Upper lobe of right lung (tissue), 1 donor: ENCODE measurements at regions of chr1 and their contacts with region 1.

Region 1: DNA sequence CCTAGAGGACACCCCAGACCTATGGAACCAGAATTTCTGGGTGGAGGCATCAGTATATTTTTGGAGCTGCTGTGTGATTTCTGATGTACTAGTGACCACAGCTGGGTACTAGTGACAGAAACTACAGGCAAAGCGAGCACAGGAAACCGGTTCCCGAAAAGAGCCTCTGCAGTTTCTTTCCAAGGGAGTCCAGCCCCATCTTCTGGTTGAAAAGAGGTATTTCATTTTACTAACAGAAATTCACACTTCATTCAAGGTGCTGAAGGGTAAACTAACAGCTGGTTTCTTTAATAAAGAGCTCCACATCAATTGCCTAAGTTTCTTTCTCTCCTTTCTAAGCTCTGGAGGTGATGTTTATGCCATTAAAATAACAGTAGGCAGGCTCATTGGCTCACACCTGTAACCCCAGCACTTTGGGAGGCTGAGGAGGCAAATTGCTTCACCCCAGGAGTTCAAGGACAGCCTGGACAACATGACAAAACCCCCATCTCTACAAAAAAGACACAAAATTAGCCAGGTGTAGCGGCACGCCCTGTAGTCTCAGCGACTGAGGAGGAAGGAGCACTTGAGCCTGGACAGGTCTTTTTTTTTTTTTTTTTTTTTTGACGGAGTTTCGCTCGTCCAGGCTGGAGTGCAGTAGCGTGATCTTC is 22.0 kb downstream of the THAP3 start:
- DNase-seq: no peak
- ATAC-seq: peak; percentile 75
- H3K4me3 ChIP-seq: no peak overlapping the region
- H3K27ac ChIP-seq: no peak overlapping the region
- H3K4me1 ChIP-seq: no peaks in the 10 kb centered on the region
- H3K27me3 ChIP-seq: no peaks in the 10 kb centered on the region
- CTCF ChIP-seq: peak; percentile 54

Region 2: DNA sequence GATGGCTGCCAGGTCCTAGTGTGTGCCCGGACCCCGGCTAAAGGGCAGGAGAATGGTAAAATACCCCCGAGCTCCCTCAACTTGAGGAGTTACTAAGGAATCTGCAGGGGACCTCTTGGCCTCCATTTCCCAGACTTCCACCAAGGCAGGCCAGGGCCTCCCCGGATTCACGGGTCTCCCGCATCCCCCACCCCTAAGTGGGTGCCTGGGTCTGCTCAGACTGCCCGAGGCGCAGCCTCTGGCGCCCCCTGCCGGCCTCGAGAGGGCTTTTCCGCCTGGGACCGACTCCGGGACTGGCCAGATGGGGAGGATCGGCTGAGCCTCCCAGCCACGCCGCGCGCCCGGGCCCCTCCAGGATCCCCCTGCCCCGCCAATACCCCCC is 156.8 kb before region 1 on chr1:
- intact Hi-C with region 1: loop called (anchors 10 kb)
- DNase-seq: peak; percentile 88
- ATAC-seq: peak; percentile 74
- H3K4me3 ChIP-seq: peak overlapping the region; percentile 53
- H3K27ac ChIP-seq: no peak overlapping the region
- H3K4me1 ChIP-seq: peaks cover 27% of the 10 kb centered on the region
- H3K27me3 ChIP-seq: peaks cover 9% of the 10 kb centered on the region
- CTCF ChIP-seq: peak; percentile 94

Region 3: DNA sequence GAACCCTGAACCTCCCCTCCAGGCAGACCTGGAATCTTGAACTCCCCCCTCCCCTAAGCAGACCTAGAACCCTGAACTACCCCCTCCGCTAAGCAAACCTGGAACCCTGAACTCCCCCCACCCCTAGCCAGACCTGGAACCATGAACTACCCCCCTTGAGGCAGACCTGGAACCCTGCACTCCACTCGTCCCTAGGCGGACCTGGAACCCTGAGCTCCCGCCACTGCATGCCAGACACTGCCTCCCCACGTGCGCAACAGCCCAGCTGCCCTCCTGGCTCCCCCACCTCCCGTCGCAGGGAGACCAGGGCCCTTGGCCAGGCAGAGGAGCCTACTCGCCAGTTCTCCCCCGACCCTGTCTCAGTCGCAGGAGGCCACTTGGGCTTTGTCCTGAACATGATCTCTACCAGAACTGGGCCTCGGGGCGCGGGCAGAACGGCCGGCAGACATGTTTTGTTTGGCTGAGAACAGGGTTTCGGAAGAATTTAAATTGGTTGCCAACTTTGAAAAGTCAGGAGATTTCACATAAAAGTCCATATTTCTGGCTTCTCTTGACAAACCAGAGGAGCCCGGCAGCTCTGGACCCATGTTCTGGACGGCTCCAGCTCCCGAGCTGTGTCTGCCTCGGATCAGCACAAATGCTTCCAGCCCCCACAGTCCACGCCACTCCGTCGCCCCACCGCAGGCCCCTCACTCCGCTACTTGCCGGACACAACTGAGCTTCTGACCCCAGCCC is 145.9 kb before region 1 on chr1:
- intact Hi-C with region 1: no loop called
- DNase-seq: no peak
- ATAC-seq: no peak
- H3K4me3 ChIP-seq: no peak overlapping the region
- H3K27ac ChIP-seq: no peak overlapping the region
- H3K4me1 ChIP-seq: peaks cover 33% of the 10 kb centered on the region
- H3K27me3 ChIP-seq: no peaks in the 10 kb centered on the region
- CTCF ChIP-seq: no peak

Region 4: DNA sequence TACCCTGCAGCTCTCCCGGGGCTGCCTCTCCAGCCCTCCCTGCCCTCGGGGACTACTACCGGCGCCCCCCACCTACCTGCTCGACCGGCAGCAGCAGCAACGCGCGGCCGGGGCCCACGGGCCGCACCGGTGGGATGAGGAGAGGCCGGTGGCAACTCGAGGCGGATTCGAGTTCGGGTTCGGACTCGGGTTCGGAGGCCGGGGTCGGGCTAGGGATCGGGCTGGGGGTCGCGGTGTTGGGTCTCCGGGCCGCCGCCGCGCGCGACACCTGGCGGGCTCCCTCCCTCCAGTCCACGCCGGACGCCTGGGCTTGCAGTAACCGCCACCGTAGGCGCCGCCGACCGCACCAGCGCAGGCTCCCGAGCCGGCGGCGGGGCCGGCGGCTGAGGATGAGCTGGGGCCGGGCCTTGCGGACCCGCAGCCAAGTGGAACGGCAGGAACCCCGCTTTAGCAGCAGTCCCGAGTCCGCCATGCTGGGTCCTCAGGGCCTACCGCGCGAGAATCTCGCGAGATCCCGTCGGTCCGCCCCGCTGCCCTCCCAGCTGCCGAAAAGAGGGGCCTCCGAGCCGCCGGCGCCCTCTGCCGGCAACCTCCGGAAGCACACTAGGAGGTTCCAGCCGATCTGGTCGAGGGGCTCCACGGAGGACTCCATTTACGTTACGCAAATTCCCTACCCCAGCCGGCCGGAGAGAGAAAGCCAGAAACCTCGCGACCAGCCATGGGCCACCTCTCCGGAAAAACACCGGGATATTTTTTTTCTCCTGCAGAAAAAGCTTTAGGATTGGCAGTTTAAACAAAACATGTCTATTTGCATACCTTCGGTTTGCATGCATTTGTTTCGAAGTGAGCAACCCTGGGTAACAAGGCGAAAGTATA is 92.4 kb before region 1 on chr1 and contains the start of gene NOL9:
- intact Hi-C with region 1: no loop called
- DNase-seq: peak; percentile 98
- ATAC-seq: peak; percentile 100
- H3K4me3 ChIP-seq: peak within 1 kb of the TSS; percentile 98
- H3K27ac ChIP-seq: peak within 1 kb of the TSS; percentile 79
- H3K4me1 ChIP-seq: peaks cover 21% of the 10 kb centered on the region
- H3K27me3 ChIP-seq: no peaks in the 10 kb centered on the region
- CTCF ChIP-seq: peak; percentile 95
- total RNA-seq, gene NOL9: 23.6 TPM

Region 5: DNA sequence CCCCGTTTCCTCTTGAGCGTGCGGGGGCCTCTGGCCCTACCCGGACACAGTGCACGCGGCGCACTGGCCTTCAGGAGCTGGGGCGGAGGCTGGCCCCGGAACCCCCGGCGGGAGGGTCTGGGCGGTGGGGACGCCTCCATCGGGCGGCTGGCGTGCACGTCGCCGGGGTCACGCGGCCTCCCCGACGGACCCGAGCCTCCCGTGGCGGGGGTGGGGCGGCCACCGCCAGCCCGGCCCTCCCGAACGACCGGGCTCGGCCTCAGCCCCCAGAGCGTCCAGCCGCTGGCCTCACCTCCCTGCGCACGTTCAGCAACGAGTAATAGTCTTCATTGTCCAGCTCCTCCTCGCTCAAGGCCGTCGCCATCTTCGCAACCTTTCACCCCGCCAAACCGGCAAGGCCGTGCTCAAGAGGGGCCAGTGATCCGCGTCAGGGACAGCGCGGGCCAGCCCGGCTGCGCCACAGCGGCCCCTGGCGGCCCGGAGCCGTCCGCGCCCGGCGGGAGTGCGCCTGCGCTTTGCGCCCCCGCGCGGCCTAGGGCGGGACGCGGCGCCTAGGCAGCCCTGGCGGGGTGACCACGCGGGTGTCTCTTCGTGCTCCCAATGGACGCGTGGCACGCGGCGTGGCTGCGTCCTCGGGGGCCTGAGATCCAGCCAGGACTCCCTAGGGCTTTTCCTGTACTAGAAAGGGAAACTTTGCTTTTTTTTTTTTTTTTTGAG is 55.0 kb after region 1 on chr1 and contains the start of gene DNAJC11:
- intact Hi-C with region 1: no loop called
- DNase-seq: peak; percentile 94
- ATAC-seq: peak; percentile 100
- H3K4me3 ChIP-seq: peak within 1 kb of the TSS; percentile 100
- H3K27ac ChIP-seq: peak within 1 kb of the TSS; percentile 86
- H3K4me1 ChIP-seq: peaks cover 7% of the 10 kb centered on the region
- H3K27me3 ChIP-seq: no peaks in the 10 kb centered on the region
- CTCF ChIP-seq: peak; percentile 77
- total RNA-seq, gene DNAJC11: 37.6 TPM

Region 6: GRCh38 chr1:6956488-6957159 is 310.0 kb after region 1 on chr1:
- intact Hi-C with region 1: no loop called
- DNase-seq: no peak
- ATAC-seq: no peak
- H3K4me3 ChIP-seq: no peak overlapping the region
- H3K27ac ChIP-seq: no peak overlapping the region
- H3K4me1 ChIP-seq: no peaks in the 10 kb centered on the region
- H3K27me3 ChIP-seq: no peaks in the 10 kb centered on the region
- CTCF ChIP-seq: no peak